CD4-positive, alpha-beta T cell (primary cell): ENCODE measurements at regions of chr11 and their contacts with region 1.

Region 1: GRCh38 chr11:59668950-59669610 is at the start of gene PATL1:
- DNase-seq: peak; percentile 98 to 100 (median 99)
- ATAC-seq: peak; percentile 88
- H3K4me3 ChIP-seq: peak within 1 kb of the TSS; percentile 95
- H3K4me3 Mint-ChIP-seq: peak within 1 kb of the TSS; percentile 99
- H3K27ac ChIP-seq: peak within 1 kb of the TSS; percentile 98
- H3K27ac Mint-ChIP-seq: peak within 1 kb of the TSS; percentile 99
- H3K4me1 ChIP-seq: peaks cover 36% of the 10 kb centered on the region
- H3K4me1 Mint-ChIP-seq: peaks cover 52% of the 10 kb centered on the region
- H3K27me3 ChIP-seq: no peaks in the 10 kb centered on the region
- H3K27me3 Mint-ChIP-seq: no peaks in the 10 kb centered on the region
- CTCF ChIP-seq: no peak
- total RNA-seq, gene PATL1: 51.8 to 55.2 TPM

Region 2: DNA sequence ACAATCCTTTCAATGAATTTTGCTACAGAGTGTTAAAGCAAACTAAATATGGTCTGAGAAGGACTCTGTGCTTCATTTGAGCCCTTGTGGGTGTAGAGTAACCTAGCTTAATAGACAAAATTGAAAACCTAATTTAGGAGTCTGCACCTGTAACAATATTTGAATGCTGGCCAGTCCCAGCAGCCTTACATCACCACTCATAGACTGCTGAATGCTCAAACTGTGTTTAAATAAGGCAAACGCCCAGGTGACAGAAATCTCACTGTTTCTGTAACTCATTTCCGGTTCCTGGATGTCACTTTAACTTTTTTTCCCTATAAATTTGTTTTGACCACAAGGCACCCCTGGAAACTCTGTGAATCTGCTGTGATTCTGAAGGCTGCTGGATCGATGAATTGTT is 628.5 kb before region 1 on chr11:
- CTCF ChIA-PET with region 1: no interaction called
- POLR2A ChIA-PET with region 1: no interaction called
- intact Hi-C with region 1: no loop called
- DNase-seq: no peak
- ATAC-seq: no peak
- H3K4me3 ChIP-seq: no peak overlapping the region
- H3K4me3 Mint-ChIP-seq: no peak overlapping the region
- H3K27ac ChIP-seq: no peak overlapping the region
- H3K27ac Mint-ChIP-seq: no peak overlapping the region
- H3K4me1 ChIP-seq: no peaks in the 10 kb centered on the region
- H3K4me1 Mint-ChIP-seq: no peaks in the 10 kb centered on the region
- H3K27me3 ChIP-seq: peaks cover 1 to 5% of the 10 kb centered on the region in 2 experiments
- H3K27me3 Mint-ChIP-seq: peaks cover 14% of the 10 kb centered on the region
- CTCF ChIP-seq: no peak

Region 3: DNA sequence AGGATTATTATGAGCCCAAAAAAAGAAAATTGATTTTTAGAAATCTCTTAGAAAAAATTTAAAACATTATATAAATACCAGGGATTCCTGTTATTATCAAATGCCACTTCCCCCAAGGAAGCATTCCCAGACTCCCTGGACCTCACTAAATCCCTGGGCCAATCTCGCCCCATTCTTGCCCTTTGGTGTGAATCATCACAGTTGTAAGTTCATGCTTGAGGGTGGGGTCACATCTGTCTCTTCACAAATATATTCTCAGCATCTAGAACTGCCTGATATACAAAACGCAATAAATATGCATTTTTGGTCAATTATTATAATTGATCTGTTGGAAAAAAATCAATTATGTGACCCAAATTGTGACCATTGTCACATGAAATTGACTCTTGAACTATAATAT is 220.6 kb before region 1 on chr11:
- CTCF ChIA-PET with region 1: no interaction called
- POLR2A ChIA-PET with region 1: no interaction called
- intact Hi-C with region 1: no loop called
- DNase-seq: no peak
- ATAC-seq: no peak
- H3K4me3 ChIP-seq: no peak overlapping the region
- H3K4me3 Mint-ChIP-seq: no peak overlapping the region
- H3K27ac ChIP-seq: no peak overlapping the region
- H3K27ac Mint-ChIP-seq: no peak overlapping the region
- H3K4me1 ChIP-seq: no peaks in the 10 kb centered on the region
- H3K4me1 Mint-ChIP-seq: no peaks in the 10 kb centered on the region
- H3K27me3 ChIP-seq: no peaks in the 10 kb centered on the region
- H3K27me3 Mint-ChIP-seq: peaks cover 5% of the 10 kb centered on the region
- CTCF ChIP-seq: no peak

Region 4: DNA sequence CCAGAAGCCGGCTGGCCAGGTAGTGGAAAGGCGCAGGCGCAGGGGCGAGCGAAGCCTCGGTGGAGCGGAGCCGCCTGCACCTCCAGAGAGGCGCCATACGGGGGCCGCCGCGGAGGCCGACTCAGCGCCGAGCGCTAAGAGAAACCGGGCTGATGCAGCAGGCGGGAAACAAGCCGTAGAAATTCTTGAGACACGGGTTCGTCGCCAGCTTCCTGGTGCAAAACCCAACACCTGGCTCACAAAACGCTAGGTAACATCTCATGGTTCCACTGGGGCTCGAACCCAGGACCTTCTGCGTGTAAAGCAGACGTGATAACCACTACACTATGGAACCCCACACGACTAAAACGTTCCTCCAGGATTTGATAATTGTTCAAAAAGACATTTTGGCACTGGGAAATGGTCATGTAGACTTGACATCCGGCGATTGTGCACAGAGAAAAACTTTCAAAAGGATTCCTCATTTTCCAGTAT is 118.7 kb before region 1 on chr11:
- CTCF ChIA-PET with region 1: no interaction called
- POLR2A ChIA-PET with region 1: interaction called, 15 read pairs
- intact Hi-C with region 1: loop called in 1 of 2 experiments (anchors 1 kb)
- DNase-seq: peak; percentile 71 to 94 (median 82)
- ATAC-seq: peak; percentile 81
- H3K4me3 ChIP-seq: peak overlapping the region; percentile 57
- H3K4me3 Mint-ChIP-seq: peak overlapping the region; percentile 94
- H3K27ac ChIP-seq: peak overlapping the region; percentile 35 to 37
- H3K27ac Mint-ChIP-seq: peak overlapping the region; percentile 99
- H3K4me1 ChIP-seq: peaks cover 15% of the 10 kb centered on the region
- H3K4me1 Mint-ChIP-seq: peaks cover 33% of the 10 kb centered on the region
- H3K27me3 ChIP-seq: no peaks in the 10 kb centered on the region
- H3K27me3 Mint-ChIP-seq: peaks cover 11% of the 10 kb centered on the region
- CTCF ChIP-seq: peak; percentile 60

Region 5: GRCh38 chr11:59615637-59616395 is 53.3 kb before region 1 on chr11 and contains the start of gene OSBP:
- CTCF ChIA-PET with region 1: no interaction called
- POLR2A ChIA-PET with region 1: interaction called, 130 read pairs
- intact Hi-C with region 1: loop called (anchors 1 kb)
- DNase-seq: peak; percentile 93 to 100 (median 96)
- ATAC-seq: peak; percentile 74
- H3K4me3 ChIP-seq: peak within 1 kb of the TSS; percentile 68
- H3K4me3 Mint-ChIP-seq: peak within 1 kb of the TSS; percentile 96
- H3K27ac ChIP-seq: peak within 1 kb of the TSS; percentile 90 to 99
- H3K27ac Mint-ChIP-seq: peak within 1 kb of the TSS; percentile 77
- H3K4me1 ChIP-seq: peaks cover 22% of the 10 kb centered on the region
- H3K4me1 Mint-ChIP-seq: peaks cover 48% of the 10 kb centered on the region
- H3K27me3 ChIP-seq: no peaks in the 10 kb centered on the region
- H3K27me3 Mint-ChIP-seq: no peaks in the 10 kb centered on the region
- CTCF ChIP-seq: no peak
- total RNA-seq, gene OSBP: 54.9 to 58.2 TPM

Region 6: GRCh38 chr11:59689015-59689414 is 19.9 kb after region 1 on chr11:
- CTCF ChIA-PET with region 1: no interaction called
- POLR2A ChIA-PET with region 1: no interaction called
- intact Hi-C with region 1: no loop called
- DNase-seq: no peak
- ATAC-seq: no peak
- H3K4me3 ChIP-seq: no peak overlapping the region
- H3K4me3 Mint-ChIP-seq: no peak overlapping the region
- H3K27ac ChIP-seq: no peak overlapping the region
- H3K27ac Mint-ChIP-seq: no peak overlapping the region
- H3K4me1 ChIP-seq: no peaks in the 10 kb centered on the region
- H3K4me1 Mint-ChIP-seq: no peaks in the 10 kb centered on the region
- H3K27me3 ChIP-seq: peaks cover 4 to 8% of the 10 kb centered on the region in 2 experiments
- H3K27me3 Mint-ChIP-seq: peaks cover 37% of the 10 kb centered on the region
- CTCF ChIP-seq: no peak

Region 7: GRCh38 chr11:59719556-59719955 is 50.5 kb after region 1 on chr11:
- CTCF ChIA-PET with region 1: no interaction called
- POLR2A ChIA-PET with region 1: no interaction called
- intact Hi-C with region 1: no loop called
- DNase-seq: no peak
- ATAC-seq: no peak
- H3K4me3 ChIP-seq: no peak overlapping the region
- H3K4me3 Mint-ChIP-seq: no peak overlapping the region
- H3K27ac ChIP-seq: no peak overlapping the region
- H3K27ac Mint-ChIP-seq: no peak overlapping the region
- H3K4me1 ChIP-seq: no peaks in the 10 kb centered on the region
- H3K4me1 Mint-ChIP-seq: no peaks in the 10 kb centered on the region
- H3K27me3 ChIP-seq: peaks cover 3 to 7% of the 10 kb centered on the region in 2 experiments
- H3K27me3 Mint-ChIP-seq: peaks cover 63% of the 10 kb centered on the region
- CTCF ChIP-seq: no peak

Region 8: DNA sequence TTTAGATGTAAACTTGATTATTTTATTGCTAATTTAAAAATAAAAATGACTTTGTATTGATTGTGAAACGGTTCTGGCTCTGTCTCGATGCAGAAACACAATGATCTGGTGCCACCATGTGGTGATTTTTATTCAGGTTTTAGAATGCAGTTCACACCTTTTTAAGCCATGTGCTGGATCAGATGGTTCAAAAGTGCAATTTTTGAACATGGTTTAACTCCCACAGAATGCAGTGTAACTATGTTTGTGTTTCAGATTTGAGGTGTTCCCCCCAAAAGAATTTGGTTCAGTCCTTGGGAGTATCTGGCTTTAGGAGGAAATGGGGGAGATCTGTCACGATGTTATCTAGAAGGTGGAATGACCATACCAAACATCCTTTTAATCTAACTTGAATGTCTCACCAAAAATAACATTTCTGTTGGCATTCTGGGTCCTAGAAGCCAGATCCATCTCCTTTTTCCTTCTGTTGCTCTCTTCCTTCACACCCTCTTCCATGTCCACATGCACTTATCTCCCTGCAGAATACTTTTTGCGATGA is 133.6 kb after region 1 on chr11:
- CTCF ChIA-PET with region 1: no interaction called
- POLR2A ChIA-PET with region 1: no interaction called
- intact Hi-C with region 1: loop called in 1 of 2 experiments (anchors 5 kb)
- DNase-seq: peak in 7 of 14 experiments; percentile 21 to 82 (median 57)
- ATAC-seq: peak; percentile 85
- H3K4me3 ChIP-seq: no peak overlapping the region
- H3K4me3 Mint-ChIP-seq: no peak overlapping the region
- H3K27ac ChIP-seq: no peak overlapping the region
- H3K27ac Mint-ChIP-seq: no peak overlapping the region
- H3K4me1 ChIP-seq: no peaks in the 10 kb centered on the region
- H3K4me1 Mint-ChIP-seq: no peaks in the 10 kb centered on the region
- H3K27me3 ChIP-seq: no peaks in the 10 kb centered on the region
- H3K27me3 Mint-ChIP-seq: no peaks in the 10 kb centered on the region
- CTCF ChIP-seq: peak; percentile 73